ENCODE measurements at regions of chr12 and their contacts with region 1.

Region 1: GRCh38 chr12:85424581-85425348 is 144.7 kb downstream of the ALX1 start:
- DNase-seq: peak; percentile 51
- H3K4me3 Mint-ChIP-seq: no peak overlapping the region
- H3K27ac Mint-ChIP-seq: no peak overlapping the region
- H3K4me1 Mint-ChIP-seq: no peaks in the 10 kb centered on the region
- H3K27me3 Mint-ChIP-seq: no peaks in the 10 kb centered on the region
- CTCF ChIP-seq: peak; percentile 56

Region 2: GRCh38 chr12:85448548-85449139 is 23.9 kb after region 1 on chr12:
- CTCF ChIA-PET with region 1: interaction called, 13 read pairs
- intact Hi-C with region 1: loop called (anchors 1 kb)
- DNase-seq: no peak
- H3K4me3 Mint-ChIP-seq: no peak overlapping the region
- H3K27ac Mint-ChIP-seq: no peak overlapping the region
- H3K4me1 Mint-ChIP-seq: peaks cover 13% of the 10 kb centered on the region
- H3K27me3 Mint-ChIP-seq: no peaks in the 10 kb centered on the region
- CTCF ChIP-seq: peak; percentile 33

Region 3: GRCh38 chr12:85468356-85469157 is 43.8 kb after region 1 on chr12:
- CTCF ChIA-PET with region 1: interaction called, 6 read pairs
- intact Hi-C with region 1: loop called (anchors 5 kb)
- DNase-seq: peak; percentile 70
- H3K4me3 Mint-ChIP-seq: peak overlapping the region; percentile 71
- H3K27ac Mint-ChIP-seq: peak overlapping the region; percentile 79
- H3K4me1 Mint-ChIP-seq: peaks cover 47% of the 10 kb centered on the region
- H3K27me3 Mint-ChIP-seq: no peaks in the 10 kb centered on the region
- CTCF ChIP-seq: peak; percentile 55

Region 4: GRCh38 chr12:85484387-85484786 is 59.6 kb after region 1 on chr12:
- CTCF ChIA-PET with region 1: no interaction called
- intact Hi-C with region 1: no loop called
- DNase-seq: no peak
- H3K4me3 Mint-ChIP-seq: no peak overlapping the region
- H3K27ac Mint-ChIP-seq: no peak overlapping the region
- H3K4me1 Mint-ChIP-seq: peaks cover 10% of the 10 kb centered on the region
- H3K27me3 Mint-ChIP-seq: no peaks in the 10 kb centered on the region
- CTCF ChIP-seq: no peak

Region 5: GRCh38 chr12:85872497-85873091 is 447.8 kb after region 1 on chr12:
- CTCF ChIA-PET with region 1: interaction called, 3 read pairs
- intact Hi-C with region 1: loop called (anchors 5 kb)
- DNase-seq: peak; percentile 16
- H3K4me3 Mint-ChIP-seq: no peak overlapping the region
- H3K27ac Mint-ChIP-seq: no peak overlapping the region
- H3K4me1 Mint-ChIP-seq: peaks cover 13% of the 10 kb centered on the region
- H3K27me3 Mint-ChIP-seq: no peaks in the 10 kb centered on the region
- CTCF ChIP-seq: peak; percentile 52

Region 6: GRCh38 chr12:85920324-85920947 is 495.7 kb after region 1 on chr12:
- CTCF ChIA-PET with region 1: interaction called, 11 read pairs
- intact Hi-C with region 1: loop called (anchors 1 kb)
- DNase-seq: no peak
- H3K4me3 Mint-ChIP-seq: no peak overlapping the region
- H3K27ac Mint-ChIP-seq: no peak overlapping the region
- H3K4me1 Mint-ChIP-seq: no peaks in the 10 kb centered on the region
- H3K27me3 Mint-ChIP-seq: no peaks in the 10 kb centered on the region
- CTCF ChIP-seq: peak; percentile 45

Measured in Calu3 (cell line).